ENCODE measurements at regions of chr6 and their contacts with region 1.

Region 1: GRCh38 chr6:42043787-42044475 is 6.4 kb upstream of the TAF8 start:
- DNase-seq: peak; percentile 93 to 95
- ATAC-seq: peak; percentile 64 to 82 (median 68)
- H3K4me3 ChIP-seq: peak overlapping the region; percentile 11
- H3K4me3 Mint-ChIP-seq: peak overlapping the region; percentile 91
- H3K27ac ChIP-seq: peak overlapping the region; percentile 57
- H3K27ac Mint-ChIP-seq: peak overlapping the region; percentile 87 to 97
- H3K4me1 ChIP-seq: peaks cover 86% of the 10 kb centered on the region
- H3K4me1 Mint-ChIP-seq: peaks cover 84 to 93% of the 10 kb centered on the region in 2 donors
- H3K27me3 ChIP-seq: no peaks in the 10 kb centered on the region
- H3K27me3 Mint-ChIP-seq: no peaks in the 10 kb centered on the region
- CTCF ChIP-seq: peak; percentile 91

Region 2: GRCh38 chr6:41779793-41780545 is 264.0 kb before region 1 on chr6 and contains the start of gene FRS3:
- intact Hi-C with region 1: loop called (anchors 1 kb)
- DNase-seq: peak; percentile 99
- ATAC-seq: peak; percentile 96 to 100 (median 98)
- H3K4me3 ChIP-seq: peak within 1 kb of the TSS; percentile 40
- H3K4me3 Mint-ChIP-seq: peak within 1 kb of the TSS; percentile 92
- H3K27ac ChIP-seq: no peak within 1 kb of the TSS
- H3K27ac Mint-ChIP-seq: peak within 1 kb of the TSS in 1 of 2 donors; percentile 80
- H3K4me1 ChIP-seq: peaks cover 22% of the 10 kb centered on the region
- H3K4me1 Mint-ChIP-seq: peaks cover 7 to 22% of the 10 kb centered on the region in 2 donors
- H3K27me3 ChIP-seq: no peaks in the 10 kb centered on the region
- H3K27me3 Mint-ChIP-seq: peaks cover 0 to 3% of the 10 kb centered on the region in 2 donors
- CTCF ChIP-seq: peak; percentile 77
- total RNA-seq, gene FRS3: 4.5 to 5.7 (median 5.4) TPM

Region 3: DNA sequence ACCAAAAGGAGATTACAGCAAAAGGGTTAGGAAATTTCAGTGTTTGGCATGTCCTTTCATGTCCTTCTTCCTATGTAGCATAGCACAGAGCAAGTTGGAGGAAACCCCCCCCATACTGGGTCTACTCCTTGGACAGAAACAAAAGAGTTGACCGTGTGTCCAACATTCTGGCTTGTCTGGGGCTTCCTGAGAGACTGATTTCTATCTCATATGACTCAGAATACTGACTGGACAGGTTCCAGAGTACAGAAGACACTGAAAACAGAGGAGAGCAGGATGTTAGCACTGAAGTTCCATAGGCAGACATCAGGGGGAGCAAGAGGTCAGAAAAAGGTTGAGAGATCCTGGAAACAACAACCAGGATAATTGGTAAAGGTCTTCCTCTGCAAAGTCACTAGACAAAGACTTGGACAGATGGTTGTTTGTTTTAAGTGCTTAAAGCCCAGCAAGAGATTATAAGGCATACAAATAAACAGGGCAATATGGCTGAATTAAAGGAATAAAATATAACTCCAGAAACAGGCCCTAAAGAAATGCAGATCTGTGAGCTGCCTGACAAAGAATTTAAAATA is 197.2 kb before region 1 on chr6:
- intact Hi-C with region 1: loop called (anchors 1 kb)
- DNase-seq: peak; percentile 27 to 78
- ATAC-seq: peak; percentile 63 to 84 (median 74)
- H3K4me3 ChIP-seq: no peak overlapping the region
- H3K4me3 Mint-ChIP-seq: no peak overlapping the region
- H3K27ac ChIP-seq: no peak overlapping the region
- H3K27ac Mint-ChIP-seq: no peak overlapping the region
- H3K4me1 ChIP-seq: no peaks in the 10 kb centered on the region
- H3K4me1 Mint-ChIP-seq: peaks cover 6 to 12% of the 10 kb centered on the region in 2 donors
- H3K27me3 ChIP-seq: no peaks in the 10 kb centered on the region
- H3K27me3 Mint-ChIP-seq: no peaks in the 10 kb centered on the region
- CTCF ChIP-seq: peak; percentile 71

Region 4: DNA sequence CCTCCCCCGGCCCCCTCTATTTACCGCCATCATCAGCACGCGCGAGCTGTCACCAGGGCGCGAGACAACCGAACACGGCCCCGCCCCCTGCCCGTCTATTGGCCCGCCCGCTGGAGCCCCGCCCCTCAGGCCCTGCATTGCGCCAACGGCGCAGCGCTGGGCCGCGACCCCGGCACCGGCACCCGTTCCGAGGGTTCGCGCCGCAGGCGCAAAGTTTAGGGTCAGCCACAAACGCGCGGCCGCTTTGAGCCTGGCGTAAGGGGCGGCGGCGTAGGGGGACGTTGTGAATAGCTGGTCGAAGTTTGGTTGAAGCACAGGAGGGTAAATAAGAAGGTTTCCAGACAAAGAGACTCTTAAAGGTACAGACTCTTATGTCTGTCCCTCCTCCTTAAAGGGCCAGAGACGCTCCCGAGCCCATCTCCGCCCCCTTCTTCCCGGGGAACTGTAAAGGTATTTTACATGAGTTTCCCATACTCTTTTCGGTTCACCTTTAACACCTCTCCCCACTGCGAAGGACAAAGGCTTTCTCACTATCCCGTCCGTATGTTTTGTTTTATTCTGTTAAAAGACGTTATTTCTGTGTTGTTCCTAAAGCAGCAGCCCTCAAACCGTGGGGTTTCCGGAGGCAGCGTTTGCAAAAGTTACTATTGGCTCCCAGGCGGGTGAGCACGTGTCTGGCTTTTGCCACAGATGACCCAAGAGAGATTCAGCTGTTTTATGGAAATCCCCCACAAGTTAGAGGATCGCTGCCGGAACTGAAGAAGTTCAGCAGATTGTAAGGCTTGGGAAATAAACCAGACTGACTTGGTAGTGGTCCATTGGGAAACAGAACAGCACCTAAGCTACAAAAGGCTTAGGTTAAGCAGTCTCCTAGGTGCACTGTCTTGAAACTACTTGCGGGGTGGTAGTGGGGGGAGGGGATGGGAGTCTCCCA is 148.4 kb before region 1 on chr6 and contains the start of gene USP49:
- intact Hi-C with region 1: loop called (anchors 1 kb)
- DNase-seq: peak; percentile 92 to 95
- ATAC-seq: peak; percentile 88 to 96 (median 90)
- H3K4me3 ChIP-seq: peak within 1 kb of the TSS; percentile 86
- H3K4me3 Mint-ChIP-seq: no peak within 1 kb of the TSS
- H3K27ac ChIP-seq: peak within 1 kb of the TSS; percentile 85
- H3K27ac Mint-ChIP-seq: no peak within 1 kb of the TSS
- H3K4me1 ChIP-seq: peaks cover 14% of the 10 kb centered on the region
- H3K4me1 Mint-ChIP-seq: peaks cover 11 to 13% of the 10 kb centered on the region in 2 donors
- H3K27me3 ChIP-seq: no peaks in the 10 kb centered on the region
- H3K27me3 Mint-ChIP-seq: no peaks in the 10 kb centered on the region
- CTCF ChIP-seq: no peak
- total RNA-seq, gene USP49: 6.4 to 15.1 (median 11.5) TPM

Region 5: DNA sequence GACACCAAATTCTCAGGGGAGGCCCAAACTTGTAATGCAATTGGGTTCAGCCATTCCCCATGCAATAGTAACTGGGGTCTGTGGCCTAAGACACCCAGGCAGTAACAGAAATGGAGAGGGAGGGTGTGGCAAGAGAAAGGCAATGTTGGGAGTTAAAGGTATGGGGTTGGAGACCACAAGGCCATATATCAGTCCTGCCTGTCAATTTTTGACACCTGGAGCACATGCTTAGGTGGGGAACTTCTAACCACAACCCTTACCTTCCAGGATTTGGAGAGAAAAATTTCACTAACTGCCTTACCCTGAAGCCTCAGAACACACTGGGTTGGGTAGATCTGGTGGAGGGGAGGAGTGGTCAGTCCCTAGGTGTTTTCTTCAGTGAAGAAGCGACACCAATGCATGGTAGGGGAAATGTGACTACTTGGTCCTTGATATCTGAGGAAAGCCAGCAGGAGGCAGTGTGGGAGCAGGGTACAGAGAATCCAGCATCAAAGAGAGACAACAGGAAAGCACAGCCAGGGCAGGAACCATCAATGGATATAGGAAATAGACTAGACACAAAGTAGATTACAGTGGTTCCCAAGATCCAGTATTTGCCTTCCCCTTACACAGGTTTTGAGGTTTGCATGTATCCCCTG is 141.9 kb before region 1 on chr6:
- intact Hi-C with region 1: loop called (anchors 1 kb)
- DNase-seq: peak; percentile 32 to 82
- ATAC-seq: peak; percentile 54 to 78 (median 69)
- H3K4me3 ChIP-seq: no peak overlapping the region
- H3K4me3 Mint-ChIP-seq: no peak overlapping the region
- H3K27ac ChIP-seq: no peak overlapping the region
- H3K27ac Mint-ChIP-seq: peak overlapping the region; percentile 14 to 52
- H3K4me1 ChIP-seq: peaks cover 4% of the 10 kb centered on the region
- H3K4me1 Mint-ChIP-seq: peaks cover 18 to 20% of the 10 kb centered on the region in 2 donors
- H3K27me3 ChIP-seq: no peaks in the 10 kb centered on the region
- H3K27me3 Mint-ChIP-seq: no peaks in the 10 kb centered on the region
- CTCF ChIP-seq: peak; percentile 49

Region 6: DNA sequence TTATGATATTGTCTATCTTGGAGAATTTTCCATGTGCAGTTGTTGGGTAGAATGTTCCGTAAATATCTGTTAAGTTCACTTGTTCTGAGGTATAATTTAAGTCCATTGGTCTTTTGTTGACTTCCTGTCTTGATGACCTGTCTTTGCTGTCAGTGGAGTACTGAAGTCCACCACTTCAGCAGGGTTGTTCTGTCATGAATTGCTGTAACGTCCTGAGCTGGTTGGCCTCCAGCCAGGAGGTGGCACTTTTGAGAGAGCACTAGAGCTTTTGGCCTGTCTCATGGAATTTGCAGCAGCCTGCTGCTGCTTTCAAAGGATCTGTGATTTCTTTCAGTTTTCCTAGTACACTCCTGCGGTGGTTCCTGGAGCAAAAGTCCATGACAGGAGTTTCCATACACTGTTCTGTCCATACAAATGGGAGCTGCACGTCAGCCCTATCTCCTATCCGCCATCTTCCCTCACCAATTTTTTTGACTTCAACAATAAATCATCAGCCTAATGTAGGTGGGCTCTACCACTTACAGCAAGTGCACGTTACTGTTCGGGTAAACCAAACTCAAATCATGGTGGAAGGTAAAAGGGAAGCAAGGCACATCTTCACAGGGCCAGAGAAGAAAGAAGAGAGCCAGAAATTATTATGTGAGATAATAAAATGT is 454.7 kb after region 1 on chr6:
- intact Hi-C with region 1: no loop called
- DNase-seq: no peak
- ATAC-seq: no peak
- H3K4me3 ChIP-seq: no peak overlapping the region
- H3K4me3 Mint-ChIP-seq: no peak overlapping the region
- H3K27ac ChIP-seq: no peak overlapping the region
- H3K27ac Mint-ChIP-seq: no peak overlapping the region
- H3K4me1 ChIP-seq: no peaks in the 10 kb centered on the region
- H3K4me1 Mint-ChIP-seq: no peaks in the 10 kb centered on the region
- H3K27me3 ChIP-seq: peaks cover 2% of the 10 kb centered on the region
- H3K27me3 Mint-ChIP-seq: peaks cover 17 to 46% of the 10 kb centered on the region in 2 donors
- CTCF ChIP-seq: no peak

Region 7: DNA sequence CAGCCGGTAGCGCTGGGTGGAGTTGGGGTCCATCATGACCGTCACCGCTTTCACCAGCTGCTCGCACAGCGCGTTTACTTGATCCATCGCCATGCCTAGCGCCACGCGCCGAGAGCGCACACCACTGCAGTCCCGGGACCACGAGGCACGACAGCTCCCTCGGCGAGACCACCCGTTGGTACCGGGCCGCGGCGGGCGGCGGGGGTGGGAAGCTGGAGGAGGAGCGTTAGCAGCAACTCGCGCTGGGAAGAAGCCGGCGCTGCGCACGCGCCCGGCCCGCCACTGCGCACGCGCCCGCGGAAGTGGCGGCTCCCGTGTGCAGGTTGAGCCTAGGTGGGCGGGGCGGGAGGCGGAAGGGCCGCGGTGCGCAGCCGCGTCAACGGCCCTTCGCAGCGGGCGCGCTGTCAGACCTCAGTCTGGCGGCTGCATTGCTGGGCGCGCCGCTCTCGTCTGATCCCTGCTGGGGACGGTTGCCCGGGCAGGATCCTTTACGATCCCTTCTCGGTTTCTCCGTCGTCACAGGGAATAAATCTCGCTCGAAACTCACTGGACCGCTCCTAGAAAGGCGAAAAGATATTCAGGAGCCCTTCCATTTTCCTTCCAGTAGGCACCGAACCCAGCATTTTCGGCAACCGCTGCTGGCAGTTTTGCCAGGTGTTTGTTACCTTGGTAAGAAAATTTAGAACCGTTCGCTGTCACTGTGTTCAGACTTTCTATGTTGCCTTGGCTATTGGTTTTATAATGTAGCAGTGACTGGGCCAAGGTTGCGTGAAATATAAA is 1532.0 kb after region 1 on chr6 and contains the starts of genes POLH and XPO5:
- intact Hi-C with region 1: no loop called
- DNase-seq: peak; percentile 87 to 97
- ATAC-seq: peak; percentile 97 to 99 (median 98)
- H3K4me3 ChIP-seq: peak within 1 kb of the TSS; percentile 99
- H3K4me3 Mint-ChIP-seq: peak within 1 kb of the TSS; percentile 93
- H3K27ac ChIP-seq: peak within 1 kb of the TSS; percentile 77
- H3K27ac Mint-ChIP-seq: peak within 1 kb of the TSS; percentile 89 to 95
- H3K4me1 ChIP-seq: peaks cover 14% of the 10 kb centered on the region
- H3K4me1 Mint-ChIP-seq: peaks cover 30 to 36% of the 10 kb centered on the region in 2 donors
- H3K27me3 ChIP-seq: no peaks in the 10 kb centered on the region
- H3K27me3 Mint-ChIP-seq: no peaks in the 10 kb centered on the region
- CTCF ChIP-seq: no peak
- total RNA-seq, gene POLH: 7.7 to 11.2 (median 7.8) TPM
- total RNA-seq, gene XPO5: 47.6 to 54.6 (median 48.7) TPM

Measured in natural killer cell (primary cell).